SK-N-SH (cell line): ENCODE measurements at regions of chr7 and their contacts with region 1.

Region 1: GRCh38 chr7:35985126-35985754 is 167.8 kb upstream of the EEPD1 start:
- DNase-seq: peak; percentile 96
- H3K4me3 ChIP-seq: no peak overlapping the region; a peak in 1 of 4 replicates
- H3K27ac ChIP-seq: no peak overlapping the region
- H3K4me1 ChIP-seq: no peaks in the 10 kb centered on the region; a peak in 1 of 4 replicates
- H3K27me3 ChIP-seq: no peaks in the 10 kb centered on the region
- CTCF ChIP-seq: peak; percentile 100
- EP300 ChIP-seq: no peak
- RAD21 ChIP-seq: peak; percentile 100

Region 2: DNA sequence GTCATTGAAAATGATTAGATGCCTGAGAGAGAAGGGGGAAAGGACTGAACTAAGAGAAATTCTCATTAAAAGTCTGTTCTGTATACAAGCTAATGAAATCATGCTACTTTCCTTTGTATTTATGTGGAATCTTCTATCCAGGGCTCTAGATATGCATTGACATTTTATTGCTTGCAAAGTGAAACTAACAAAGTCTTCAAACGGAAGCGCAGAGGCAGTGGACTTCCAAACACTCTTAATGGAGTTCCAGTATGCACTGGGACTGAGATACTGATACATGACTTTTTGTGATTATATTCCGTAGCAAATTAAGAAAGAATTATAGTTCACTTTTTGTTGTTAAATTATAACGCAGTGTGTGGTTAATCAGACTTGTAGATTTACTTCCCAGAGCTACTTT is 564.6 kb before region 1 on chr7:
- CTCF ChIA-PET with region 1: no interaction called
- POLR2A ChIA-PET with region 1: no interaction called
- DNase-seq: no peak
- H3K4me3 ChIP-seq: no peak overlapping the region
- H3K27ac ChIP-seq: no peak overlapping the region
- H3K4me1 ChIP-seq: no peaks in the 10 kb centered on the region; a peak in 1 of 4 replicates
- H3K27me3 ChIP-seq: 0 out of 2 replicates have a peak, but pooled peaks cover 4% of the 10 kb centered on the region
- CTCF ChIP-seq: no peak
- EP300 ChIP-seq: no peak
- RAD21 ChIP-seq: no peak

Region 3: GRCh38 chr7:35905555-35905954 is 79.7 kb before region 1 on chr7:
- CTCF ChIA-PET with region 1: no interaction called
- POLR2A ChIA-PET with region 1: no interaction called
- DNase-seq: no peak
- H3K4me3 ChIP-seq: no peak overlapping the region
- H3K27ac ChIP-seq: peak overlapping the region in 1 of 2 experiments; percentile 13; a peak in 2 of 4 replicates
- H3K4me1 ChIP-seq: peaks cover 6 to 24% of the 10 kb centered on the region in 2 experiments; a peak in 2 of 4 replicates
- H3K27me3 ChIP-seq: no peaks in the 10 kb centered on the region
- CTCF ChIP-seq: no peak
- EP300 ChIP-seq: no peak
- RAD21 ChIP-seq: no peak

Region 4: DNA sequence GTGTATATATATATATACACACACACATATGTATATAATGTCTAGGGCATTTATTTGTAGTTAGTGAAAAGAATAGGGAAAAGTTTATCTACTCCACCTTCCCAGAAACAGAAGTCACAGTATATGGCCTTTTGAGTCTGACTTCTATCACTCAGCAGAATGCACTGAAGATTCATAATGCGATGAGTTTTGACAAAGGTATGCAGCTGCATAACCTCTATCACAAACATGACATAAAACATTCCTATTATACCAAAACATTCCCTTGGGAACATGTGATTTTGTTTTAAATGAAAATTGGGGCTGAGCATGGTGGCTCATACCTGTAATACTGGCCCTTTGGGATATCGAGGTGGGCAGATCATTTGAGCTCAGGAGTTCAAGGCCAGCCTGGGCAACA is 30.5 kb after region 1 on chr7:
- CTCF ChIA-PET with region 1: interaction called, 14 read pairs
- POLR2A ChIA-PET with region 1: no interaction called
- DNase-seq: no peak
- H3K4me3 ChIP-seq: no peak overlapping the region
- H3K27ac ChIP-seq: no peak overlapping the region
- H3K4me1 ChIP-seq: peaks cover 0 to 5% of the 10 kb centered on the region in 2 experiments; a peak in 1 of 4 replicates
- H3K27me3 ChIP-seq: no peaks in the 10 kb centered on the region
- CTCF ChIP-seq: no peak
- EP300 ChIP-seq: peak in 1 of 2 experiments; percentile 20; a peak in 1 of 4 replicates
- RAD21 ChIP-seq: no peak

Region 5: DNA sequence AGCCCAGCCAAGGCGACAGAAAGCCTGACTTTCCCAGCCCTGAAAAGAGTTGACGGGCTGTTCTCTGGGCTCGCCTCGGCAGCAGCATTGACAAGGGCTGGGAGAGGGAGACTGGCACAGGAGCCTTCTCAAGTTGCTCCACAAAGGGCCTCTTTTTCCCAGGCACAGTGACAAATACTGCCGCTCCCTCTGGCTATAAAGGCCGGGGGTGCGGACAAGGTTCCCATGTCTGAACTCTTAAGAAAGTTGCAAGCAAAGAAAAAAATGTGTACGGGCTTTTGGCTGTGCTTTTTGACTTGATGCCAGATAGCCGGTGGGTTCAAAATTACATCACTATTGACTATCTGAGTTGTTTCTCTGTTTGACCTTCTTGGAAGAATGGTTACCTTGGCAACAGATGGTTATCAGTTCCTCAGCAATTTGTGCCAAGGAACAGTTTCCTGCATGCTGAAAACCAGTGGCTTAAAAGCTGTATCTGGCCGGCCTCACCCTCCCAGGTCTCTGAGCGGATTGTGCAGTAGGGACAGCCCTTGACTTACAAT is 52.0 kb after region 1 on chr7:
- CTCF ChIA-PET with region 1: interaction called, 18 read pairs
- POLR2A ChIA-PET with region 1: interaction called, 3 read pairs
- DNase-seq: peak; percentile 73
- H3K4me3 ChIP-seq: peak overlapping the region in 1 of 2 experiments; percentile 7; a peak in 1 of 4 replicates
- H3K27ac ChIP-seq: peak overlapping the region; percentile 81 to 96
- H3K4me1 ChIP-seq: peaks cover 21 to 48% of the 10 kb centered on the region in 2 experiments
- H3K27me3 ChIP-seq: no peaks in the 10 kb centered on the region
- CTCF ChIP-seq: no peak
- EP300 ChIP-seq: peak; percentile 77 to 96
- RAD21 ChIP-seq: peak; percentile 24; the same call in 1 of the 2 replicates

Region 6: GRCh38 chr7:36085098-36085495 is 99.9 kb after region 1 on chr7:
- CTCF ChIA-PET with region 1: interaction called, 10 read pairs
- POLR2A ChIA-PET with region 1: no interaction called
- DNase-seq: no peak
- H3K4me3 ChIP-seq: no peak overlapping the region
- H3K27ac ChIP-seq: no peak overlapping the region
- H3K4me1 ChIP-seq: peaks cover 0 to 8% of the 10 kb centered on the region in 2 experiments; a peak in 1 of 4 replicates
- H3K27me3 ChIP-seq: no peaks in the 10 kb centered on the region
- CTCF ChIP-seq: no peak
- EP300 ChIP-seq: no peak
- RAD21 ChIP-seq: no peak

Region 7: GRCh38 chr7:36198854-36199266 is 213.6 kb after region 1 on chr7:
- CTCF ChIA-PET with region 1: interaction called, 11 read pairs
- POLR2A ChIA-PET with region 1: no interaction called
- DNase-seq: no peak
- H3K4me3 ChIP-seq: no peak overlapping the region
- H3K27ac ChIP-seq: no peak overlapping the region
- H3K4me1 ChIP-seq: peaks cover 0 to 22% of the 10 kb centered on the region in 2 experiments; a peak in 3 of 4 replicates
- H3K27me3 ChIP-seq: no peaks in the 10 kb centered on the region
- CTCF ChIP-seq: no peak
- EP300 ChIP-seq: no peak
- RAD21 ChIP-seq: no peak

Region 8: DNA sequence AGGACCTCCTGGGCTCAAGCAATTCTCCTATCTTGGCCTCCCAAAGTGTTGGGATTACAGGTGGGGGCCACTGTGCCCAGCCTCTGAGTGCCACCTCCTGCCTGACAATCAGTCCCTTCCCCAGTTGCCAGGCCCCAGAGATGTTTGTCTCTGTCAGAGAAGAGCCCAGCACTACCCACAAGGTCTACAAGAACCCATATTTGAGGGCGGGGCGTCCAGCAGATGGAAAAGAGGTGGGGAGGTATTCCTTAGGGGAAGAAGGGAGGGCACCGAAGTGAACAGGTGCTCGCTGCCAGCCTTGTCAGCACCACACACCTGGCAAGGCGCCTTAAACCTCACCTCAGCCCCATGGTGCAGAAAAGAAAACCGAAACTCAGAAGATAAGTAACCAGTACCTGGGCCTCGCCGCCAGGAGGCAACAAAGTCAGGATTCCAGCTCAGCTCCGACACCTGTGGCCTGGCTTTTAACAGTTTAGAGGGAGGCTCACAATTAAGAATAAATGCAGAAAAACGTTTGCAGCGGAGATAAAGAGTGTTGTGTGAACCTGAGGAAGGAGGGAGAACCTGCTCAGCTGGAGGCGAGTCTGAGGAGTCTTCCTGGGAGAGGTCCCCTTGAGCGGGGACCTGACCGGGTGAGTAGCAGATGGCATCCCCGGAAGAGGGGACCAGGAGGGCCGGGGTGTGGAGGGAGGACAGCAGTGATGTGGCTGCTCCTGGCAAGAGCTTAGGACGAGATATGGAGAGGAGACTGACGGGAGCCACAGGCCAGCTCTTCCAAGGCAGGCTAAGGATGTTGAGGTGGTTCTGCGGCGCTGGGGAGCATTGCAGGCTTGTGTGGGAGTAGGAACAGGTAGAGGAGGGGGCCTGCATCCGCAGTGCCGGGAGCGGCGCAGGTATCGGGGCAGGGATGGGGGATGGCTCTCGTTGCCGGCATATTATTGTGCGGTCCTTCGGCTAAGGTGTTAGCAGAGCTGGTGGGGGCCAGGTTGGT is 327.4 kb after region 1 on chr7:
- CTCF ChIA-PET with region 1: interaction called, 369 read pairs
- POLR2A ChIA-PET with region 1: no interaction called
- DNase-seq: no peak
- H3K4me3 ChIP-seq: no peak overlapping the region
- H3K27ac ChIP-seq: no peak overlapping the region
- H3K4me1 ChIP-seq: peaks cover 0 to 10% of the 10 kb centered on the region in 2 experiments; a peak in 1 of 4 replicates
- H3K27me3 ChIP-seq: no peaks in the 10 kb centered on the region
- CTCF ChIP-seq: no peak
- EP300 ChIP-seq: no peak
- RAD21 ChIP-seq: no peak